ENCODE measurements at regions of chr15 and their contacts with region 1.

Region 1: GRCh38 chr15:90598031-90598577 is 68.4 kb downstream of the CRTC3 start:
- DNase-seq: peak; percentile 44 to 72
- ATAC-seq: peak; percentile 47 to 78 (median 66)
- H3K4me3 ChIP-seq: no peak overlapping the region
- H3K27ac ChIP-seq: peak overlapping the region; percentile 65
- H3K4me1 ChIP-seq: peaks cover 49% of the 10 kb centered on the region
- H3K27me3 ChIP-seq: no peaks in the 10 kb centered on the region
- CTCF ChIP-seq: no peak

Region 2: DNA sequence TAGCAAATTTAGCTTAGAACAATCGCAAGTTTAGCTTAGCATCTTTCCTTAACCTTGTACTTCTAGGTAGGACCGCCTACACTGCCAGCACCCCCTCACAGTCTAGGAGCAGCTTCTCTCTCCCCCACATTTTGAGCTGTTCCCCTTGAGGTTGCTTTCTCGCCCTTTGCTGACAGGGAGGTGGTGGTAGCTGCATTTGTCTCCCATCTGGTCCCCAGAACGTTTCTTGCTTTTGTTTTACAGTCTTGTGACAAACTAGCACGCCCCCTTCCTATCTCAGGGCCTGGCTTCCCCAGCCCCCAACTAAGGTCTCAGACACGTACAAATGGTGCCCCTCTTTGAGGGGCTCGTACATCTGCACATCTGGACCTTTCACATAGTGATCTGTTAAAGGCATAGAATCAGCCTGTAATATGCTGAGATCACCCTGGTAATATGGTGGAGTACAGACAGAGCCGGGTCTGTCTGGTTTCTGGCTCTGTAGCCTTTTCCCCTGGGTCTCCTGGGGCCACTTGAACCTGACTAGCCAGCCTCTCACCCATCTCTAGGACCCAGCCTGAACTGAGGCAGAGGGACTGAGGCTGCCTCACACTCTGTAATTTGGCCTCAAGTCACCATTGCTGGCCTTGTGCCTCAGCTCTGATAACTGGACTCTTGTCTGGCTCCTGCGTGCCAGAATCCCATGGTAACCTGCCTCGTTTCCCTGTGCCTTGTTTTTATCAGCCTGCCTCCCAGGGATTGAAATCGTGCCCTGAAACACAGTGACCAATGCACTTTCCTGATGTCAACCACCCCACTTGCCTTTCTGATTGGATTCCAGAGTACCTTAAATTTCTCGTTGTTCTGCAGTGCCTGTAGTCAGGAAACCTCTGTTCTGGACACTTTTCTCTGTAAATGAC is 40.7 kb before region 1 on chr15:
- intact Hi-C with region 1: loop called in 1 of 2 experiments (anchors 5 kb)
- DNase-seq: peak; percentile 78 to 89
- ATAC-seq: peak; percentile 52 to 71 (median 57)
- H3K4me3 ChIP-seq: no peak overlapping the region
- H3K27ac ChIP-seq: peak overlapping the region; percentile 72
- H3K4me1 ChIP-seq: peaks cover 65% of the 10 kb centered on the region
- H3K27me3 ChIP-seq: no peaks in the 10 kb centered on the region
- CTCF ChIP-seq: no peak